WTC11 (cell line): ENCODE measurements at regions of chr3 and their contacts with region 1.

Region 1: GRCh38 chr3:125150525-125151441 is 61.8 kb downstream of the SLC12A8 start:
- DNase-seq: peak; percentile 78
- ATAC-seq: peak; percentile 84
- H3K4me3 Mint-ChIP-seq: no peak overlapping the region
- H3K27ac Mint-ChIP-seq: no peak overlapping the region
- H3K4me1 Mint-ChIP-seq: peaks cover 39% of the 10 kb centered on the region
- H3K27me3 Mint-ChIP-seq: no peaks in the 10 kb centered on the region; the same call in 1 of the 2 replicates
- CTCF ChIP-seq: peak; percentile 77

Region 2: GRCh38 chr3:124995460-124995994 is 155.3 kb before region 1 on chr3:
- CTCF ChIA-PET with region 1: interaction called, 12 read pairs
- POLR2A ChIA-PET with region 1: no interaction called
- DNase-seq: peak; percentile 69
- ATAC-seq: peak; percentile 89
- H3K4me3 Mint-ChIP-seq: no peak overlapping the region
- H3K27ac Mint-ChIP-seq: no peak overlapping the region
- H3K4me1 Mint-ChIP-seq: peaks cover 45% of the 10 kb centered on the region
- H3K27me3 Mint-ChIP-seq: no peaks in the 10 kb centered on the region
- CTCF ChIP-seq: peak; percentile 18; the same call in 1 of the 2 replicates

Region 3: GRCh38 chr3:125137352-125138033 is 13.3 kb before region 1 on chr3:
- CTCF ChIA-PET with region 1: interaction called, 11 read pairs
- POLR2A ChIA-PET with region 1: no interaction called
- DNase-seq: no peak
- ATAC-seq: no peak
- H3K4me3 Mint-ChIP-seq: no peak overlapping the region
- H3K27ac Mint-ChIP-seq: peak overlapping the region; percentile 28
- H3K4me1 Mint-ChIP-seq: peaks cover 16% of the 10 kb centered on the region
- H3K27me3 Mint-ChIP-seq: peaks cover 5% of the 10 kb centered on the region
- CTCF ChIP-seq: no peak

Region 4: DNA sequence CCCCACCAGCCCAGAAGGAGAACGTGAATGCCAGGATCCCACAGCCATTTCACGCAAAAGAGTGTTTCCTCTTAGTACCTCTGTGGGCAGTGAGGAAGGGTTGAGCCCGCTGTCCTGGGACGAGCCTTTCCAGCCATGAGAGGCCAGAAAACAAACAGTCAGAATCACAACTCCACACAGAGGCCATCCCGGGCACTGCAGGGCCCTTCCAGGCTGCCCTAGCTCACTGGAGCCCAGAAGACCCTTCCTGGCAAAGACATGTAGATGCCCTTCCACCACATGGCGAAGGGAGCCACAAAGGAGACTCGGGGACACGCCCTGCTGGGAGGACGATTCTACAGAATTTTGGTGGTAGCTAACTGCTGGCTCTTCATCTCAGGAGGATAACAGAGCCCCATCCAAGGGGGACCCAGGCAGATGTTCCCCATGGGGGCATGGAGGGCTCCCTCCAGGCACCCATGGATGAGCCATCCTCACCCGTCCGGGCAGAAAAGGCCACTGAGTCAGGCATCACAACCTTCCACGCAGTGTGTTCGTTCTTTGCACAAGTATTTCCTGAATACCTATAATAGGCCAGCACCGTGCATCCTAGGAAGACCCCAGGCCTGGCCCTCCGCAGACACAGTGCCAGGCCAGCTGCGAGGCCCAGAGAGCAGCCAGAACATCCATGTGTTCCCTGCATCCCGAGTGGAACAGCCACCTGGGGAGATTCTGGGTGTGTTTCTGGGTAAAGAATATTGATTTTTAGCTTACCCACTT is 14.6 kb after region 1 on chr3:
- CTCF ChIA-PET with region 1: interaction called, 19 read pairs
- POLR2A ChIA-PET with region 1: no interaction called
- DNase-seq: peak; percentile 65
- ATAC-seq: peak; percentile 87
- H3K4me3 Mint-ChIP-seq: no peak overlapping the region
- H3K27ac Mint-ChIP-seq: no peak overlapping the region; the same call in 1 of the 2 replicates
- H3K4me1 Mint-ChIP-seq: peaks cover 11% of the 10 kb centered on the region
- H3K27me3 Mint-ChIP-seq: no peaks in the 10 kb centered on the region
- CTCF ChIP-seq: peak; percentile 32; the same call in 1 of the 2 replicates

Region 5: DNA sequence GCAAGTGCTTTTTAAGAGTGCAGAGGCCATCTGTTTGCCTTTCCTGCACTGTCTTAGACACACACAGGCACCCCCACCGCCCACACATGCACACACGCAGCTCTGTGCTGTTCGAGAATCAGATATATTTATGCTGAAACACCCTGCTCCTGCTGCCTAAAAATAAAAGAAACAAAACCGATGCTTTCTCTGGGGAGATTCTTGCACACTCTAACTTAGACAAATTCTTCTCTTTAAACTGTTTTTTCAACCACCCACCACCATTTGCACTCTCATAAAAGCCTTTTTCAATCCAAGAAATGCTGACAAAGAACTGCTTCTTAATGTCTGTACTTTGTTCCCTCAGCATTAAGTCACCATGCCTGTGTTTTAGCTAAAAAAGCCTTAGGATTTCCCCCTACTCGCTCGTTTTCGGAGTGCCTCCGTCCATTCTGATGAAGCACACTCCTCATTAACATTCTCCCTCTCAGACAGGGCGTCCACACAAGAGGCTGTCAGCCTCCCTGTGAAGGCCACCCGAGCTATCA is 35.5 kb after region 1 on chr3:
- CTCF ChIA-PET with region 1: no interaction called
- POLR2A ChIA-PET with region 1: no interaction called
- DNase-seq: no peak
- ATAC-seq: no peak
- H3K4me3 Mint-ChIP-seq: no peak overlapping the region
- H3K27ac Mint-ChIP-seq: peak overlapping the region; percentile 19; the same call in 1 of the 2 replicates
- H3K4me1 Mint-ChIP-seq: peaks cover 31% of the 10 kb centered on the region
- H3K27me3 Mint-ChIP-seq: no peaks in the 10 kb centered on the region
- CTCF ChIP-seq: no peak

Region 6: DNA sequence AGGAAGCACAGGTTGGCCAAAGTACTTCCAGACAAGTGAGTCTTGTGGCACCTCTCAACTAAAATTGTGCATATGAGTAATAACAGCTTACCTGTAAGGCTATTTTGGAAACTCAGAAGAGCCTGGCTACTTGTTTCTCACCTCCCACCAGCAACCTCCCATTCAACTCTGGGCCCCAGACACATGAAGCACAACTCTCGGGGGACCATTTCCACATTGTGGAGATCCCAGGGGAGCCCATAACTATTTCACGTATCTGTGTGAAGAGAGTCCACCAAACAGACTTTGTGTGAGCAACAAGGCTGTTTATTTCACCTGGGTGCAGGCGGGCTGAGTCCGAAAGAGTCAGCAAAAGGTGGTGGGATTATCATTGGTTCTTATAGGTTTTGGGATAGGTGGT is 374.4 kb after region 1 on chr3:
- CTCF ChIA-PET with region 1: no interaction called
- POLR2A ChIA-PET with region 1: no interaction called
- DNase-seq: no peak
- ATAC-seq: no peak
- H3K4me3 Mint-ChIP-seq: no peak overlapping the region
- H3K27ac Mint-ChIP-seq: no peak overlapping the region
- H3K4me1 Mint-ChIP-seq: 0 out of 2 replicates have a peak, but pooled peaks cover 3% of the 10 kb centered on the region
- H3K27me3 Mint-ChIP-seq: no peaks in the 10 kb centered on the region
- CTCF ChIP-seq: no peak